SK-N-SH (cell line): ENCODE measurements at regions of chr11 and their contacts with region 1.

Region 1: GRCh38 chr11:118473537-118473936 is 37.2 kb downstream of the KMT2A start:
- DNase-seq: no peak
- H3K4me3 ChIP-seq: no peak overlapping the region
- H3K27ac ChIP-seq: no peak overlapping the region
- H3K4me1 ChIP-seq: no peaks in the 10 kb centered on the region
- H3K27me3 ChIP-seq: no peaks in the 10 kb centered on the region
- CTCF ChIP-seq: no peak
- EP300 ChIP-seq: no peak
- RAD21 ChIP-seq: no peak

Region 2: DNA sequence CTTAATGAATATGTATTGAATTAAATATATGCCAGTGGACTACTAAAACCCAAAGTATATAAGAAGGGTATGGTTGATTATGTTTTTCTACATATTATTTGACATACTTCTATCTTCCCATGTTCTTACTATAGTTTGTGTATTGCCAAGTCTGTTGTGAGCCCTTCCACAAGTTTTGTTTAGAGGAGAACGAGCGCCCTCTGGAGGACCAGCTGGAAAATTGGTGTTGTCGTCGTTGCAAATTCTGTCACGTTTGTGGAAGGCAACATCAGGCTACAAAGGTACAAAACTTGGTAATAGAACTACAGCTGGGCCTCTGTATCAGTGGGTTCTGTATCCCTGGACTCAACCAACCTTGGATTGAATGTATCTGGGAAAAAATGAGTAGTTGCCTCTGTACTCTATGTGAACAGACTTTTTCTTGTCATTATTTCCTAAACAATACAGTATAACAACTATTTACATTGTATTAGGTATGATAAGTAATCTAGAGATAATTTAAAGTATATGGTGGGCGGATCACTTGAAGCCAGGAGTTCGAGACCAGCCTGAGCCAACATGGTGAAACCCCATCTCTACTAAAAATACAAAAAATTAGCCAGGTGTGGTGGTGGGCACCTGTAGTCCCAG is 15.1 kb after region 1 on chr11:
- CTCF ChIA-PET with region 1: interaction called, 13 read pairs
- POLR2A ChIA-PET with region 1: no interaction called
- DNase-seq: peak; percentile 74
- H3K4me3 ChIP-seq: no peak overlapping the region; a peak in 1 of 4 replicates
- H3K27ac ChIP-seq: no peak overlapping the region
- H3K4me1 ChIP-seq: no peaks in the 10 kb centered on the region
- H3K27me3 ChIP-seq: no peaks in the 10 kb centered on the region
- CTCF ChIP-seq: peak; percentile 93
- EP300 ChIP-seq: no peak
- RAD21 ChIP-seq: peak; percentile 91

Region 3: GRCh38 chr11:118536726-118537125 is 63.2 kb after region 1 on chr11:
- CTCF ChIA-PET with region 1: no interaction called
- POLR2A ChIA-PET with region 1: no interaction called
- DNase-seq: no peak
- H3K4me3 ChIP-seq: no peak overlapping the region
- H3K27ac ChIP-seq: no peak overlapping the region
- H3K4me1 ChIP-seq: peaks cover 0 to 6% of the 10 kb centered on the region in 2 experiments; a peak in 1 of 4 replicates
- H3K27me3 ChIP-seq: no peaks in the 10 kb centered on the region
- CTCF ChIP-seq: no peak
- EP300 ChIP-seq: no peak
- RAD21 ChIP-seq: no peak